Prostate gland (tissue), 2 donors: ENCODE measurements at regions of chr7 and their contacts with region 1.

Region 1: DNA sequence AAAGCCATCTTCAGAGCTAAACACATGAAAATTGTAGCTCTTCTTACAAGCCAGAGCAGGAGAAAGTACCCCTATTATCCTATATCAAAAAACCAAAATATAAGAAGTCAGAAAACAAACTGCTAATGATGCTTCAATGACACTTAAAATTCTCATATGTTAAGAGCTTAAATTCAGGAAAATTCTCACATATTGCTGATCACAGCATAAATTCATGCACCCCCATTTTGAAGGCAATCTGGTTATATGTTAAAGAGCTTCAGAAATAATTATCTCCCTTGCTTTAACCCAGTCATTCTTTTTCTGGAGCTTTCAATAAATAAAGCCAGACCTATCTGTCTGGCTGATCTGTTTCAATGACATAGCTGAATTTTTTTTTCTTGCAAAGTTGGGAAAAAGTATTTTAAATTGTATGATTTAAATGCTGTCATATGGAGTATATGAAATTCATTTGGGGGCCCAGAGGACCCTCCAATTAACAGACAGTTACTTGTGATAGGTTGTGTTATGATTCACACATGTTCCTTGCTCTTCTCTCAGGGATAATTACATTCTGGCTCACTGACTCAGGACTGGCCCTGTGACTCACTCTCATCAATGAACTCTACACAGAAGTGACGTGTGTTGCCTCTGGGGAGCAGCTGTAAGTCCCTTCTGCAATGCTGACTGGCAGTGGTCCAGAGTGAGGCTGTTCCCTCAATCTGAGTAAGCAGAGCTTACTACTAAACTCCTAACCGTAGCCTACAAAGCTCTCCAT is 85.2 kb downstream of the HGF start:
- DNase-seq: peak; percentile 32
- H3K4me3 ChIP-seq: no peak overlapping the region
- H3K27ac ChIP-seq: no peak overlapping the region
- H3K4me1 ChIP-seq: no peaks in the 10 kb centered on the region
- H3K27me3 ChIP-seq: no peaks in the 10 kb centered on the region
- CTCF ChIP-seq: no peak
- POLR2A ChIP-seq: no peak

Region 2: GRCh38 chr7:81769891-81770727 is 85.4 kb after region 1 on chr7 and contains the start of gene HGF:
- intact Hi-C with region 1: loop called (anchors 5 kb)
- DNase-seq: peak; percentile 34
- H3K4me3 ChIP-seq: peak within 1 kb of the TSS; percentile 6 to 16
- H3K27ac ChIP-seq: peak within 1 kb of the TSS; percentile 26 to 46
- H3K4me1 ChIP-seq: no peaks in the 10 kb centered on the region
- H3K27me3 ChIP-seq: no peaks in the 10 kb centered on the region
- CTCF ChIP-seq: no peak
- POLR2A ChIP-seq: no peak
- total RNA-seq, gene HGF: 7.5 to 8.1 TPM

Region 3: DNA sequence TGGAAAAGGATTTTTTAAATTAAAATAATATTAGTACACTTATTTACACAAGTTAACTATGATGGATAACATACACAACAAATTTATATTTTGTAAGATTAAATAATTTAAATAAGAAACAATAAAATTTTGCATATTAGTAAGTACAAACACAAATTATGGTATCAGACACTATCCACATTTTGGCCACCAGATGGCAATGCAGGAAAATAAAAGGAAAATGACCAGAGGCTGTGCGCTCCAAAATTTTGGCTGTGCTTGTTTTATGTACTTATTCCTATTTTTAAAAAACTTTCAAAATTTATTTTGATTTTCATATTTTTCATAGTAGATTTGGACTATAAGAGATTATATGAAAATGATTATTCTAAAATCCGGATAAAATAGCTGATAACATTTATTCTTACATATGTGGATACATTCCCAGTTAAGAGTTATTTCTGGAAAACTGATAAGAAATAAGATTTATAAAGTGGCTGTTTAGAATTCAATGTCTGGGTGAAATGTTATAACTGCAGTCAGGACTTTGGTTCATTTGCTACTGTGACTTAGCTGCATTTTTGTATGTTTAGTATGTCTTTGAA is 359.9 kb after region 1 on chr7:
- intact Hi-C with region 1: no loop called
- DNase-seq: peak; percentile 40
- H3K4me3 ChIP-seq: no peak overlapping the region
- H3K27ac ChIP-seq: no peak overlapping the region
- H3K4me1 ChIP-seq: no peaks in the 10 kb centered on the region
- H3K27me3 ChIP-seq: no peaks in the 10 kb centered on the region
- CTCF ChIP-seq: peak; percentile 51 to 76 (median 71)
- POLR2A ChIP-seq: no peak